ENCODE measurements at regions of chr2 and their contacts with region 1.

Region 1: GRCh38 chr2:207625018-207625907 is at the start of gene METTL21A:
- DNase-seq: peak; percentile 55 to 92
- H3K4me3 ChIP-seq: peak within 1 kb of the TSS; percentile 93 to 96
- H3K27ac ChIP-seq: peak within 1 kb of the TSS; percentile 95 to 97
- H3K4me1 ChIP-seq: peaks cover 0 to 18% of the 10 kb centered on the region in 2 donors
- H3K27me3 ChIP-seq: no peaks in the 10 kb centered on the region
- CTCF ChIP-seq: peak; percentile 46 to 50 (median 50)
- total RNA-seq, gene METTL21A: 1.5 TPM

Region 2: GRCh38 chr2:206159346-206160124 is 1465.7 kb before region 1 on chr2 and contains the starts of genes EEF1B2 and NDUFS1:
- intact Hi-C with region 1: loop called (anchors 10 kb)
- DNase-seq: peak; percentile 86 to 98
- H3K4me3 ChIP-seq: peak within 1 kb of the TSS; percentile 77 to 89
- H3K27ac ChIP-seq: peak within 1 kb of the TSS; percentile 92 to 93
- H3K4me1 ChIP-seq: peaks cover 0 to 21% of the 10 kb centered on the region in 2 donors
- H3K27me3 ChIP-seq: no peaks in the 10 kb centered on the region
- CTCF ChIP-seq: no peak
- total RNA-seq, gene EEF1B2: 229 TPM
- total RNA-seq, gene NDUFS1: 16.4 TPM

Region 3: GRCh38 chr2:206981739-206982340 is 643.4 kb before region 1 on chr2:
- intact Hi-C with region 1: loop called (anchors 10 kb)
- DNase-seq: peak; percentile 29 to 88
- H3K4me3 ChIP-seq: no peak overlapping the region
- H3K27ac ChIP-seq: no peak overlapping the region
- H3K4me1 ChIP-seq: peaks cover 0 to 13% of the 10 kb centered on the region in 2 donors
- H3K27me3 ChIP-seq: no peaks in the 10 kb centered on the region
- CTCF ChIP-seq: peak; percentile 74 to 88 (median 80)

Region 4: DNA sequence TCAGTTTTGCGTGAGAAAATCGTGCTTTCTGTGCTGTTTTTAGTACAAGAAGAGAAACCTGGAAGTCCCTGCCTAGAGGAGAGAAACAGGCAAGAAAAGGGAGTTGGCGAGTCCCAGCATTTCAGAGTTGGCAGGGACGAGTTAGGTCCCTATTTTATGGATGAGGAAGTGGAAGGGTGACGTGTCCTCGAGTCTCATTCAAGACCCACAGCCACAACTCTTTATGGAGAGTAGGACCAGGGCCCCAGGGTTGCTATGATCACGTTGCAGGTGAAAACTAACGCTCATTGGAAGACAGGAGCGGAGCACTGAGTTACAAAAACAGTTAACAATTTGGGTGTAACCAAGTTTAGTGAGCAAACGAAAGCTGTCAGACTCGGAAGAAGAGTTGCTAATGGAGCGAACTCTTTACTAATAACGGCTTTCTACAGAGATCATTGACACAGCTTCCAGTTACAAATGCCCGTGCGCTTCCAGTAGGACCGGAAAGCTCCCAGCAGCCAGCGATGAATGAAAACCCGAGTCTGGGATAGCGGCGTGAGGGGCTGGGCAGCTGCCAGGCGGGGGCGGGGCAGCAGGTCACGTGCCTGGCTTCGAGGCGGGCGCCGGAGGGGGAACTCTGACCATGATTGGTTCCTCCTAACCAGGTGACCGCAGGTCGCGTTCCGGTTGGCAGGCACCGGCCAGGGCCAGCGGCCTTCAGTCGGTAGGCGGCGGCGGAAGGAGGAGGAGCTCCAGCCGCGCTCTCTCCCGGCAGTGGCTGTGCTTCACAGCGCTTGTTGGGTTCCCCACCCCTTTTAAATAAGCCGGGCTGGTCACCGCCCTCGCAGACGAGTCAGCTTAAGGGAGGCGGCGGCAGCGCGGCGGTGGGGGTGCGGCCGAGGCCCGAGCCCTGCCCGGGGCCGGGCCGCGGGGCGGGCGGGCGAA is 85.8 kb after region 1 on chr2 and contains the start of gene CCNYL1:
- intact Hi-C with region 1: loop called (anchors 1 kb)
- DNase-seq: peak; percentile 95 to 99
- H3K4me3 ChIP-seq: peak within 1 kb of the TSS; percentile 75 to 92
- H3K27ac ChIP-seq: peak within 1 kb of the TSS; percentile 88 to 90
- H3K4me1 ChIP-seq: peaks cover 0 to 6% of the 10 kb centered on the region in 2 donors
- H3K27me3 ChIP-seq: no peaks in the 10 kb centered on the region
- CTCF ChIP-seq: peak; percentile 17 to 55 (median 17)
- total RNA-seq, gene CCNYL1: 12.3 TPM

Region 5: GRCh38 chr2:208040199-208041171 is 415.2 kb after region 1 on chr2:
- intact Hi-C with region 1: loop called (anchors 5 kb)
- DNase-seq: peak; percentile 11 to 78
- H3K4me3 ChIP-seq: no peak overlapping the region
- H3K27ac ChIP-seq: no peak overlapping the region
- H3K4me1 ChIP-seq: no peaks in the 10 kb centered on the region
- H3K27me3 ChIP-seq: no peaks in the 10 kb centered on the region
- CTCF ChIP-seq: peak; percentile 56 to 66 (median 65)

Region 6: DNA sequence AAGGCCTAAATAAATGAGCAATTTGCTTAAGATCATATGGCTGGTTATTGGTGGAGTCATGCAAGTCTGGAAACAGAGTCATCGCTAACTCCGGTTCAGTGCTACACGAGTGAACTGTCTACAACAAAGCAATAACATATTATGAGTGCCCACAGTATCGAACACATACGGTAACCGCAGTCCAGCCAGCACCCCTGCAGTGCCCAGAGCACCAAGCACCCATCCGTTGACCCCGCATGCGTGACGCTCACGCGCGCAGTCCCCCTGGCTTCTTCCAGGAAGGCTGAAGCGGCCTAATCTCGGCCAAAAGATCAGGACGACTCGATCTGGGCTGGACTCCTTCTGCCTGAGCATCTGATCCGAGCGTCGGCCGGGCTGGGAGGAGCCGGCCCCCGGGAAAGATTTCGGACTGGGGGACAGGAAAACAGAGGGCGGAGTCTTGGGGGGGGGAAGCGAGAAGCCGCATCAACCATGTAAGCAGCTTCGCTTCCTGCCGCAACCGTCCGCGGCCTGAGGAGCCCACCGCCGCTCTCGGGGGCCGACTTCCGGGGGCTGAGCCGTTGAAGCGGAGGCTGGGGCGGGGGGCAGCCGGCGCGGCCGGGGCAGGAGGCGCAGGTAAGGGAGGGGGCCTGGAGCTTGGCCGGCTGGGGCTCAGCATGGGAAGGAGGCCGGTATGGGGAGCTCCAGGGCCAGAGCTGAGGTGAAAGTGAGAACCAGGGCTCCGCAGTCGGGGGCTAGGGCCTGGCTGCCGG is 640.7 kb after region 1 on chr2 and contains the start of gene PIKFYVE:
- intact Hi-C with region 1: loop called (anchors 1 kb)
- DNase-seq: peak; percentile 88 to 98
- H3K4me3 ChIP-seq: peak within 1 kb of the TSS; percentile 93 to 100
- H3K27ac ChIP-seq: peak within 1 kb of the TSS; percentile 97 to 98
- H3K4me1 ChIP-seq: peaks cover 0 to 21% of the 10 kb centered on the region in 2 donors
- H3K27me3 ChIP-seq: no peaks in the 10 kb centered on the region
- CTCF ChIP-seq: no peak
- total RNA-seq, gene PIKFYVE: 12.0 TPM